Posterior vena cava (tissue), 2 donors: ENCODE measurements at regions of chr10 and their contacts with region 1.

Region 1: GRCh38 chr10:70540089-70540788 is 61.7 kb downstream of the PALD1 start:
- DNase-seq: no peak

Region 2: GRCh38 chr10:70500812-70501301 is 39.4 kb before region 1 on chr10:
- intact Hi-C with region 1: no loop called
- DNase-seq: no peak

Region 3: DNA sequence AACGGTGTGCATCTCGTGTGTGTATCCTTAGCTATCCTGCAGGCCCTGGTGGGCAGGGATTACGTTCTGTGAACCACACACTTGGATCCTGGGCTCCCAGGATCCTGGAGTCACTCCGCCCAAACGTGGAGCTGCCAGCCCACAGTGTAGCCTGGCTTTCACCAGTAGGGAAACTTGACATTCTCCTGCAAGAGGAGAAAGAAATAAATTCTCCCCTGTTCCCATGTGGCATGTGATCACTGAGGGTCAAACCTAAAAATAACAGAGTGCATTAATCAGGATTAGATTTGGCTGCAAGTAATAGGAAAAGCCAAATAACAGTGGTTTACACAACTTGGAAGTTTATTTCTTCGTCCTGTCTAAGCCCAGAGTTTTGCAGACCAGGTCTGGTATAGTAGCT is 29.3 kb before region 1 on chr10:
- intact Hi-C with region 1: loop called in 1 of 2 experiments (anchors 2 kb)
- DNase-seq: no peak

Region 4: GRCh38 chr10:70558871-70559810 is 18.9 kb after region 1 on chr10:
- intact Hi-C with region 1: no loop called
- DNase-seq: peak; percentile 82

Region 5: DNA sequence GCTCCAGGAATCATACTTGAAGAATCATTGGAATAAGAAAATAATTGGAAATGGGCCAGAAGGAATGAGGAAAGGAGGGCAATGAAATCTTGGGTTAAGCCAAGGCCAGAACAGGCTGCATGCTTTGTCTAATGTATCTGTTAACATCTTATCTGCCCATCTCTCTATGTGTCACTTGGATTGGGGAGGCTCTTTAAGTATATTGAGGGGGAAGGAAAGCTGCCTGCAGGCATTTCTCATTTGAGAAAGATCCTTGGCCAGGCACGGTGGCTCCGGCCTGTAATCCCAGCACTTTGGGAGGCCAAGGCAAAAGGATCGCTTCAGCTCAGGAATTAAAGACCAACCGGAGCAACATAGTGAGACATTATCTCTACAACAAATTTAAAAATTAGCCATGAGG is 333.8 kb after region 1 on chr10:
- intact Hi-C with region 1: loop called in 1 of 2 experiments (anchors 5 kb)
- DNase-seq: no peak